ENCODE measurements at regions of chr10 and their contacts with region 1.

Region 1: GRCh38 chr10:131964296-131964695 is 17.4 kb downstream of the BNIP3 start:
- DNase-seq: no peak
- H3K4me3 Mint-ChIP-seq: no peak overlapping the region
- H3K27ac Mint-ChIP-seq: peak overlapping the region; percentile 71
- H3K4me1 Mint-ChIP-seq: peaks cover 24% of the 10 kb centered on the region
- H3K27me3 Mint-ChIP-seq: no peaks in the 10 kb centered on the region

Region 2: GRCh38 chr10:131943021-131943814 is 21.1 kb before region 1 on chr10:
- CTCF ChIA-PET with region 1: no interaction called
- POLR2A ChIA-PET with region 1: no interaction called
- DNase-seq: no peak
- H3K4me3 Mint-ChIP-seq: no peak overlapping the region
- H3K27ac Mint-ChIP-seq: no peak overlapping the region
- H3K4me1 Mint-ChIP-seq: peaks cover 11% of the 10 kb centered on the region
- H3K27me3 Mint-ChIP-seq: no peaks in the 10 kb centered on the region

Region 3: GRCh38 chr10:131981429-131982184 is 17.3 kb after region 1 on chr10 and contains the start of gene BNIP3:
- CTCF ChIA-PET with region 1: interaction called, 10 read pairs
- POLR2A ChIA-PET with region 1: interaction called, 12 read pairs
- DNase-seq: peak; percentile 90
- H3K4me3 Mint-ChIP-seq: peak within 1 kb of the TSS; percentile 82
- H3K27ac Mint-ChIP-seq: peak within 1 kb of the TSS; percentile 59
- H3K4me1 Mint-ChIP-seq: peaks cover 39% of the 10 kb centered on the region
- H3K27me3 Mint-ChIP-seq: peaks cover 17% of the 10 kb centered on the region
- total RNA-seq, gene BNIP3: 60.2 to 62.3 TPM